Endothelial cell of umbilical vein (primary cell): ENCODE measurements at regions of chr5 and their contacts with region 1.

Region 1: GRCh38 chr5:69334793-69335268 is 2.2 kb upstream of the CCDC125 start:
- DNase-seq: peak; percentile 69
- H3K4me3 ChIP-seq: no peak overlapping the region
- H3K27ac ChIP-seq: no peak overlapping the region
- H3K4me1 ChIP-seq: peaks cover 7% of the 10 kb centered on the region
- H3K27me3 ChIP-seq: no peaks in the 10 kb centered on the region
- CTCF ChIP-seq: peak; percentile 77 to 97
- POLR2A ChIP-seq: no peak

Region 2: DNA sequence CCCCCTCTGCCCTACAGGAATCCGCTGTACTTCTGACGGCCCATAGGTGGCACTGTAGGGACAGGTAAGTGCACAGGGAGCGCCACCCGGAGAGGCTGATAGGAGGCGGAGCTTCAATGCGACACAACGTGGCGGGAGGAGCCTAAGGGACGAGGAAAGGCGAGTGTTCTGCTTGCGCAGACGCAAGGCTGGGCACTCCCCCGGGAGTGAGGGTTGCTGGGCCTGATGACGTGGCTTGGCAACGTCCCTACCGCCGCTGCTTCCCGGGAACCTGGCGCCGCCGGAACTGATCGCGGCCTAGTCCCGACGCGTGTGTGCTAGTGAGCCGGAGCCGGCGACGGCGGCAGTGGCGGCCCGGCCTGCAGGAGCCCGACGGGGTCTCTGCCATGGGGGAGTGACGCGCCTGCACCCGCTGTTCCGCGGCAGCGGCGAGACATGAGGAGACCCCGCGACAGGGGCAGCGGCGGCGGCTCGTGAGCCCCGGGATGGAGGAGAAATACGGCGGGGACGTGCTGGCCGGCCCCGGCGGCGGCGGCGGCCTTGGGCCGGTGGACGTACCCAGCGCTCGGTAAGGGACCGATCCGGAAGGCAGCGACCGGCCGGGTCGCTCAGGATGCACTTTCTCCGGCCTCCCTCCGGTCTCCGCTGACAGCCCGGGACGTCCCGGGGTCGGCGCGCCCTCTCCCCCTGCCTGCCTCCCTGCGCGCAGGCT is 240.9 kb before region 1 on chr5 and contains the start of gene SLC30A5:
- CTCF ChIA-PET with region 1: interaction called, 47 read pairs
- POLR2A ChIA-PET with region 1: no interaction called
- dilution Hi-C with region 1: no loop called
- intact Hi-C with region 1: loop called (anchors 1 kb)
- DNase-seq: peak; percentile 100
- H3K4me3 ChIP-seq: peak within 1 kb of the TSS; percentile 84 to 97 (median 85)
- H3K27ac ChIP-seq: peak within 1 kb of the TSS; percentile 87
- H3K4me1 ChIP-seq: peaks cover 9% of the 10 kb centered on the region
- H3K27me3 ChIP-seq: no peaks in the 10 kb centered on the region
- CTCF ChIP-seq: peak; percentile 89 to 93
- POLR2A ChIP-seq: peak; percentile 96
- total RNA-seq, gene SLC30A5: 37.0 and 47.2 TPM in 2 replicates

Region 3: GRCh38 chr5:69189162-69190086 is 145.4 kb before region 1 on chr5 and contains the start of gene CENPH:
- CTCF ChIA-PET with region 1: no interaction called
- POLR2A ChIA-PET with region 1: no interaction called
- dilution Hi-C with region 1: no loop called
- intact Hi-C with region 1: loop called (anchors 1 kb)
- DNase-seq: peak; percentile 92
- H3K4me3 ChIP-seq: peak within 1 kb of the TSS; percentile 56 to 91 (median 80)
- H3K27ac ChIP-seq: peak within 1 kb of the TSS; percentile 73
- H3K4me1 ChIP-seq: peaks cover 12% of the 10 kb centered on the region
- H3K27me3 ChIP-seq: no peaks in the 10 kb centered on the region
- CTCF ChIP-seq: no peak
- POLR2A ChIP-seq: peak; percentile 78
- total RNA-seq, gene CENPH: 16.4 and 17.1 TPM in 2 replicates

Region 4: DNA sequence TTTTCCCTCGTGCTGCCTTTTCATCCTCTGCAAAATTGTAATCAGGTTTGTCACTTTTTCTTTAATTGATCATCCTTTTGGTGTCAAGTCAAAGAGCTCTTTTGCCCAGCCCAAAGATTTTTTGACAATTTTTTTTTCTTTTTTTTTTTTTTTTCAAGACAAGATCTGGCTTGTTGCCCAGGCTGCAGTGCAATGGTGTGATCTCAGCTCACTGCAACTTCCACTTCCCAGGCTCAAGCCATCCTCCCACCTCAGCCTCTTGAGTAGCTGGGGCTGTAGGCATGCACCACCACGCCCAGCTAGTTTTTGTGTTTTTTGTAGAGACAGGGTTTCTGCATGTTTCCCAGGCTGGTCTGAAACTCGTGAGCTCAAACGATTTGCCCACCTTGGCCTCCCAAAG is 63.5 kb before region 1 on chr5:
- CTCF ChIA-PET with region 1: interaction called, 13 read pairs
- POLR2A ChIA-PET with region 1: no interaction called
- dilution Hi-C with region 1: no loop called
- intact Hi-C with region 1: no loop called
- DNase-seq: peak; percentile 44
- H3K4me3 ChIP-seq: no peak overlapping the region
- H3K27ac ChIP-seq: no peak overlapping the region
- H3K4me1 ChIP-seq: no peaks in the 10 kb centered on the region
- H3K27me3 ChIP-seq: no peaks in the 10 kb centered on the region
- CTCF ChIP-seq: no peak
- POLR2A ChIP-seq: no peak

Region 5: DNA sequence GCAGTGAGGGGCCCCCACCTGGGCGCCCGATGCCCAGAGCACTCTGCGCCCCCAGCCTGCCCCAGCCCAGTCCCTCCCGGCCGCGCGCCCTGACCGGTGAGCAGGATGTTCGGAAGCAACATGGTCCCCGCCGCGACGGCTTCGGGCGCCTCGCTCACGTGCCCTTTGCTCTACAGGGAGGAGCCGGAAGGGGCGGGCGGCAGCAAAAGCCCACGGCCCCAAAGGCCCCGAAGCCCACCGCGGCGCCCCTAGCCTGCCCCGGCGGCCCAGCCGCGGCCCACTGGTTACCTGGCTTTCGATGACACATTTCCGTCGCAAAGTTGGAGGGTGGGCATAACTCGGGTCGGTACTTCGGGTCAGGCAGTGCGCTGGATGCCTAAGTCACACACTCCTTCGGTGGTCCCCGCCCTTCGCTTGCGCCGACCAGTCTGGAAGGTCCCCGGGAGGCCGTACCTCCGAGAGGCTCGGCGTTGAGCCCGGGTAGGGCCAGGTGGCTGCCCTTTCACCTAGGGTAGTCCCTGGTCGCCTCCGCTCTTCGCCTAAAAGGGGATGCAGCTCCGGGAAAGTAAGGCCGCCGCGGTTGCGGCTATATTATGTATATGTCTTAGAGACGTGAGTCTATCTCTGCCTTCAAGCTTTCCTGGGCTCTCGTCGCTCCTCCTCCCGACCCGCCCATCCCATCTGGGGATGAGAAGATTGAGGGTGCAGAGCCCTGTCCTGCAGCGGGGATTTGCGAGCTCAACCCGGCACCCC is 34.7 kb after region 1 on chr5 and contains the starts of genes AK6, RAD17 and TAF9:
- CTCF ChIA-PET with region 1: no interaction called
- POLR2A ChIA-PET with region 1: no interaction called
- dilution Hi-C with region 1: no loop called
- intact Hi-C with region 1: loop called (anchors 2 kb)
- DNase-seq: peak; percentile 95
- H3K4me3 ChIP-seq: peak within 1 kb of the TSS; percentile 82 to 100 (median 98)
- H3K27ac ChIP-seq: peak within 1 kb of the TSS; percentile 97
- H3K4me1 ChIP-seq: peaks cover 15% of the 10 kb centered on the region
- H3K27me3 ChIP-seq: no peaks in the 10 kb centered on the region
- CTCF ChIP-seq: no peak
- POLR2A ChIP-seq: peak; percentile 95
- total RNA-seq, gene AK6: 30.1 and 37.0 TPM in 2 replicates
- total RNA-seq, gene RAD17: 18.4 and 21.9 TPM in 2 replicates
- total RNA-seq, gene TAF9: 67.6 and 67.8 TPM in 2 replicates